ENCODE measurements at regions of chr7 and their contacts with region 1.

Region 1: DNA sequence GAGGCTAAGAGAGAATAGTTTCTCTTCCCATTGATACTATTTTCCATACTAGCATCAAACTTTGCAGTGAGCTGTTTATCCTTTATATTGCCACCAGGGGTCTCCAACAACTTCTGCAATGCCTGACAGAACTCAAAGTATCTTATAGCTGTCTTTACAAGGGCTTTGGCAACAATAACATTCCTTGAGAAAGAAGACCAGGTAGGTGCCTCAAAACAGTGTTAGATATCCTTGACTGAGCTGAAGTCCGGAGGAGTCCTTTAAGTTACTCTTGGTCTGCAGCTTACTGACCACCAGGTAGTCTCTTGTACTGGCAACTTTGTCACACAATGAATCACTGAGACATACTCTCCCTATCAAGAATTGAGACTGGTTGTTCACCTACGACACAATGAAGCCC is 30.0 kb upstream of the TES start:
- DNase-seq: no peak
- H3K4me3 Mint-ChIP-seq: no peak overlapping the region
- H3K27ac Mint-ChIP-seq: no peak overlapping the region
- H3K4me1 Mint-ChIP-seq: no peaks in the 10 kb centered on the region
- H3K27me3 Mint-ChIP-seq: peaks cover 7% of the 10 kb centered on the region

Region 2: GRCh38 chr7:116138202-116138801 is 42.0 kb before region 1 on chr7:
- intact Hi-C with region 1: loop called (anchors 2 kb)
- DNase-seq: no peak
- H3K4me3 Mint-ChIP-seq: no peak overlapping the region
- H3K27ac Mint-ChIP-seq: no peak overlapping the region
- H3K4me1 Mint-ChIP-seq: peaks cover 13% of the 10 kb centered on the region
- H3K27me3 Mint-ChIP-seq: peaks cover 26% of the 10 kb centered on the region

Region 3: GRCh38 chr7:116218051-116218645 is 37.8 kb after region 1 on chr7:
- intact Hi-C with region 1: loop called (anchors 5 kb)
- DNase-seq: no peak
- H3K4me3 Mint-ChIP-seq: no peak overlapping the region
- H3K27ac Mint-ChIP-seq: no peak overlapping the region
- H3K4me1 Mint-ChIP-seq: peaks cover 63% of the 10 kb centered on the region
- H3K27me3 Mint-ChIP-seq: no peaks in the 10 kb centered on the region

Region 4: DNA sequence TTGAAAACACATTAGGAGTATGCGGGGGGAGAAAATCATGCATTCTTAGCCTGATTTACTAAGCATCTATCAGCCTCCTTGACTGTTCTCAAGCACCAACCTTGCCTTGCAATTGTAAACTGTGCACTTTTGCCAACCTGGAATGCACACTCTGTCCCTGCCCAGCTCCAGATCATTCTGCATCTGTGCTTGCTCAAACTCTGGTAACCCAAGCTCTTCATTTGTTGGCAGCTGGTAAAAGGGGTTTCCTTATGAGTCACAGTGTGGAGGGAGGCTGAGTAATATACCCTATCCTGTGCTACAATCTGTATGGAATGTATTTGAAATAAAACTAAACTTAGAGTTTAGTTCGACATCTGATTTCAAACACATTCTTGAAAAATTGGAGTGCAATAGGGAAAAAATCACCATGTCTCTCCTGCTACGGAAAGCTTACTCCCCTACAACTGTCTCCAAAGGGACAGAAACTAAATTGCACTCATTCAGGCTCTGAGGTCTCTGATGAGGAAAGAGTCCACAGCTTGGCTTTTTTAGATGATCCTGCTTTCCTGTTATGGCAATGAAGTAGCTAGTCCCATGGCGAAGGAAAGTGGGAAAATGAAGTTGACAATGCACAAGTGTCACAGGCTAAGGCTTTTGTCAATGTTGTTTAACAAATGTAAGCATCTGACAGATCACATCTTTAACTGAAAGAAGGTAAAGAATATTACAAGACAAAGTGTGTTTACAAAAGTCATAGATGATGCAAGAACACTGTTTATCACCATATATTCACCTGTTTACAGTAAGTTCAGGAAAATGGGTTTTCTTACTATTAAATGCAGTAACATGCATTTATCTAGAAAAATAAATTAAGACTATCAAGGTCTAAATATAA is 91.9 kb after region 1 on chr7:
- intact Hi-C with region 1: no loop called
- DNase-seq: no peak
- H3K4me3 Mint-ChIP-seq: no peak overlapping the region
- H3K27ac Mint-ChIP-seq: no peak overlapping the region
- H3K4me1 Mint-ChIP-seq: peaks cover 2% of the 10 kb centered on the region
- H3K27me3 Mint-ChIP-seq: peaks cover 40% of the 10 kb centered on the region

Measured in activated T-helper 2 cell treated with anti-CD3 and anti-CD28 coated beads, Interferon-gamma antibody, Interleukin-2, Interleukin-4, amounts not matched to agents 10 μg/mL and 5 μg/mL and 100 μg/mL, durations not matched to agents 14 hours and 24 hours and 36 hours (primary cell).